Activated CD4-positive, alpha-beta T cell treated with anti-CD3 and anti-CD28 coated beads, Interleukin-2, amount 10 ng/mL, durations not matched to agents 24 days and 14 days (primary cell): ENCODE measurements at regions of chr7 and their contacts with region 1.

Region 1: DNA sequence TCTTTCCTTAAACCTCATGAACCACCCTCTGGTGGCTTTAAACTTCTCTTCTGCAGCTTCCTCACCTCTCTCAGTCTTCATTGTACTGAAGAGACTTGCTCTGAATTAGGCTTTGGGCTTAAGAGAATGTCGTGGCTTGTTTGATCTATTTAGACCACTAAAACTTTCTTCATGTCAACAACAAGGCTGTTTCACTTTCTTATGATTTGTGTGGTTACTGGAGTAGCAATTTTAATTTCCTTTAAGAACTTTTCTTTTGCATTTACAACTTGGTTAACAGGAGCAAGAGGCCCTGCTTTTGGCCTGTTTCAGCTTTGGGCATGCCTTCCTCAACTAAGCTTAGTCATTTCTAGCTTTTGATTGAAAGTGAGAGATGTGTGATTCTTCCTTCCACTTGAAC is 38.1 kb upstream of the CDHR3 start:
- DNase-seq: peak; percentile 76
- H3K4me3 Mint-ChIP-seq: no peak overlapping the region
- H3K27ac Mint-ChIP-seq: peak overlapping the region; percentile 22
- H3K4me1 Mint-ChIP-seq: peaks cover 13% of the 10 kb centered on the region
- H3K27me3 Mint-ChIP-seq: peaks cover 26% of the 10 kb centered on the region

Region 2: GRCh38 chr7:105849122-105849855 is 75.7 kb before region 1 on chr7:
- intact Hi-C with region 1: loop called (anchors 2 kb)
- DNase-seq: peak; percentile 90
- H3K4me3 Mint-ChIP-seq: peak overlapping the region; percentile 23
- H3K27ac Mint-ChIP-seq: peak overlapping the region; percentile 59
- H3K4me1 Mint-ChIP-seq: peaks cover 44% of the 10 kb centered on the region
- H3K27me3 Mint-ChIP-seq: peaks cover 1% of the 10 kb centered on the region

Region 3: GRCh38 chr7:105866102-105866801 is 58.7 kb before region 1 on chr7:
- intact Hi-C with region 1: no loop called
- DNase-seq: no peak
- H3K4me3 Mint-ChIP-seq: no peak overlapping the region
- H3K27ac Mint-ChIP-seq: no peak overlapping the region
- H3K4me1 Mint-ChIP-seq: no peaks in the 10 kb centered on the region
- H3K27me3 Mint-ChIP-seq: no peaks in the 10 kb centered on the region

Region 4: DNA sequence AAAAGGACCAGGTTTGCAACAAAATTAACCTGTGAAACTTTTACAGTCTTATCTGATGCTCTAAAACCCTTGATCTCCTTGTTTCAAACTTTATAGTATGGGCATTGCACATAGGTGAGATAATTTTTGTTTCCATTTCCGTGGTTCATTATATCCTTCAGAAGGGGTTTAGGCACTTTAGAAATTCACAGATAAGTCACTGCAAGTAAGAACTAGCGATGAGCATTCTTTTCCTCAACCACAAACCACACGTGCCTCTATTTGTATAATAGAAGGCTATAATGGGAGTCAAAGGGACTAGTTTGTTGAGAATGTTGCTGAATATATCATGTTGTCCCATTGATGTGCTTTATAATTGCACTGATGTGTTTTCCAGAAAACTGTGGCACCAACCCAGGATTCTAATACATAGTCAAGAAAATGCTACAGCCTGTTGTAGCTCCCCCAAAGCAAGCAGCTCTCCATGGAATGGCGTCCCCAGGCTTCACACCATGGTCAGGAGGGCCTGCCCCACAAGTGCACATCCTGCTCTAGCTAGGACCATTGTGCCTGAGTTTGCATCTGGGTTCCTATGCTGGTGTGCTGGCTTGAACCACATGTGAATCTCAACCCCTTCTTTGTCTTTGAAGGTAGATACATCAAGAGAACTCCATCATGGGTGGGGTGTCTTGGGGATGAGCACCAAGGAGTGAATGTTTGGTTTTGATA is 34.5 kb before region 1 on chr7:
- intact Hi-C with region 1: loop called (anchors 1 kb)
- DNase-seq: no peak
- H3K4me3 Mint-ChIP-seq: no peak overlapping the region
- H3K27ac Mint-ChIP-seq: no peak overlapping the region
- H3K4me1 Mint-ChIP-seq: peaks cover 8% of the 10 kb centered on the region
- H3K27me3 Mint-ChIP-seq: peaks cover 29% of the 10 kb centered on the region

Region 5: DNA sequence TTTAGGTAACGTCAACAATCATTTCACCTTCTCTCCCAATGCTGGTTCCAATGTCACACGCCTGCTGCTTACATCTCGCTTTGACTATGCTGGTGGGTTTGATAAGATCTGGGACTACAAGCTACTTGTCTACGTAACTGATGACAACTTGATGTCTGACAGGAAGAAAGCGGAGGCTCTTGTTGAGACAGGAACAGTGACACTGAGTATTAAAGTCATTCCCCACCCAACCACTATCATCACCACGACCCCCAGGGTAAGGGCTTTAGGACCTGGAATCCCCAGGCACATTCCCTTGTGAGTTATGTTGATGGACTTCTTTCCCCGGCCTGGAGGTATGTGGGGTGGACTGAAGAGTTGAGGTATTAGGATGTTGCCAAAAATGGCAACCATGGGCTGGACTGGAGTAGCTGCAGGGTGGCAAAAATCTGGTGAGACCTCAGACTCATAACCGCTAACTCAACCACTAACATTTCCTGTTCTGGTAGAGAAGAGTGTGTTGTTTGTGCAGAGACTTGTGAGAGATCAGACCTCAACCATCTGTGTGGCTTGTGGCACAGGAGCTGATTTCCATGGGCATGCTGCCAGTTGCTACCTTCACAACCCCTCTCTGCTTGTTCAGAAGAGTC is 97.4 kb after region 1 on chr7:
- intact Hi-C with region 1: loop called (anchors 1 kb)
- DNase-seq: peak; percentile 88
- H3K4me3 Mint-ChIP-seq: peak overlapping the region; percentile 63
- H3K27ac Mint-ChIP-seq: peak overlapping the region; percentile 83
- H3K4me1 Mint-ChIP-seq: peaks cover 56% of the 10 kb centered on the region
- H3K27me3 Mint-ChIP-seq: peaks cover 5% of the 10 kb centered on the region